ENCODE measurements at regions of chr16 and their contacts with region 1.

Region 1: GRCh38 chr16:81996664-81997622 is 14.3 kb downstream of the SDR42E1 start:
- DNase-seq: no peak
- ATAC-seq: peak; percentile 67

Region 2: GRCh38 chr16:81745704-81746558 is 251.0 kb before region 1 on chr16:
- intact Hi-C with region 1: no loop called
- DNase-seq: peak; percentile 85
- ATAC-seq: peak; percentile 90

Region 3: GRCh38 chr16:82152196-82153112 is 155.5 kb after region 1 on chr16:
- intact Hi-C with region 1: loop called (anchors 2 kb)
- DNase-seq: no peak
- ATAC-seq: no peak

Region 4: DNA sequence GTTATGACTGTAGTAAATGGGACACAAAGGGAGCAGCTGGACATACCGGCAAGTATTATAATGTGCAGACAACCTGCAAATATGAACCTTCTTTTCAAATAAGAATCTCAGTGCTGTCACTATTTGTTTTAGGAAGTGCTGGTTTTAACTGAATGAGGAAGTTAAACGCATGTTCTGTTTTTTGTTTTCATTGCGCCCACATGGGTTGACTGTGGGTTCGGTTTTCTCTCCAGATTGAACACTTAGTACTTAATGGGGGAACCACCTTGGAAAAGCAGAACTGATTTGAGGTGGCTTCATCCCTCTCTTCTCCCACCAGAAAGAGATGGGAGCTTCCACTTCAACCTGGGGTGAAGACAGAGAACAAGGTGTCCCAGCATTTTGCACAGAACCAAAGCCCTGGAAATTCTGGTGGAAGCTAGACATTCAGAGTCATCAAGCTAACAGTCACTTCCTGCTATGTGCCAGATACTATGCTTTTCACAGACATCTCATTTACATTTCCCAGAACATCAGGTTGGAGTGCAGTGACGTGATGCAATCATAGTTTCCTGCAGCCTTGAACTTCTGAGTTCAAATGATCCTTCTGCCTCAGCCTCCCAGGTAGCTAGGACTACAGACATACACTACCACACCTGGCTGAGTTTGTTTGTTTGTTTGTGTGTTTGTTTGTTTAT is 779.7 kb after region 1 on chr16:
- intact Hi-C with region 1: no loop called
- DNase-seq: no peak
- ATAC-seq: peak; percentile 26

Region 5: DNA sequence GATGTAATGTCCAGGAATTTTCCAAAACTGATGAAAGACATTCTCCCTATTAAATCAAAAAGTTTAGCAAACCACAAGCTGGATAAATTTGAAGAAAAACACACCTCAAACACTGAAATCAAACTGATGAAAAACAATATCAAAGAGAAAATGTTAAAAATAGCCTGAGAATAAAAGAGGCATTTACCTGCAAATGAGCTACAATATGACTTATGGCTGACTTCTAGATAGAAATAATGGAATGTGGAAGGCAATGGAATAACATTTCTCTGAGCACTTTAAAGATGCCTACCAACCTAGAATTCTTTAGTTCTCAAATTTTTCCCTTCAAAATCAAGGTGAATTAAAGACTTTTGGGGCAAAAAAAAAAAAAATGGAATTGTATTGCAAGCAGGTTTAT is 1758.4 kb after region 1 on chr16:
- intact Hi-C with region 1: no loop called
- DNase-seq: no peak
- ATAC-seq: no peak

Measured in sciatic nerve (tissue), 2 donors.